ENCODE measurements at regions of chr11 and their contacts with region 1.

Region 1: DNA sequence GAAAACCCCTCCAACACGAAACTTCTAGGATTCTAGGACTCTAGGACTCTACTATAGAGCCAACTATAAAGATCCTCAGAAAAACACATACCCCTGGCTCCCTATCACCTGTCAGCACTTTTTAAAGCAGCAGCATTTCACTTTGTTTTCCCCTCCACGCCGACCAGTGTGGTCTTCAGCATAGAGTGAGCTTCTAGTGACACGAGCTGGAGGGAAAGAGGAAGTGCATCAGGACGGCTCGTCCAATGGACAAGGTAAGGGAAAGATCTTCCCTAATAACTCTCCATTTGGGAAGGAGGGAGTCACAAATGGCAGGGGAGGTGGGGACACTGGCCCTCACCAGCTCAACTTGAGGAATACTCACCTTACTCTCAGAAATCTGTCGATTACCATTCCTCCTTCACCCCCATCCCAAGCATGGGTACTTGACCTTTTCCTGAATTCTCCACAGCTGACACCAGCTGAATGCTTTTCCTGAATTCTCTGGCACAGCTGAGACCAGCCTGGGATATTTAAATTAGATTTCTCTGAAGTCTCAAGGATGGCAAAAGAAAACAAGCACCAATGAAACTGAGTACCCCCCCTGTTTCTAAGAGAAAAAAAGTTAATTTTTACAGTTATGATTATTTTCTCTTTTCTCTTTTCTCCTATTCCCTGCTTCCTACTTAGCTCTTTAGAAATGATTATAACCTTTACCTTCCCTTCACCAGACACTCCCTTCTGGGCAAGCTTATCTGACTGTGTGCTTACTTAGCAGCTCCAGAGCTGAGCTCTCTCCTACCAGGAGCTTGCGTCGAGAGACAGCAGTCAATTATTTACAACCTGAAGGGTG is 33.3 kb upstream of the NNMT start:
- DNase-seq: peak; percentile 44
- H3K4me3 Mint-ChIP-seq: no peak overlapping the region
- H3K27ac Mint-ChIP-seq: no peak overlapping the region
- H3K4me1 Mint-ChIP-seq: peaks cover 6% of the 10 kb centered on the region
- H3K27me3 Mint-ChIP-seq: peaks cover 16% of the 10 kb centered on the region

Region 2: DNA sequence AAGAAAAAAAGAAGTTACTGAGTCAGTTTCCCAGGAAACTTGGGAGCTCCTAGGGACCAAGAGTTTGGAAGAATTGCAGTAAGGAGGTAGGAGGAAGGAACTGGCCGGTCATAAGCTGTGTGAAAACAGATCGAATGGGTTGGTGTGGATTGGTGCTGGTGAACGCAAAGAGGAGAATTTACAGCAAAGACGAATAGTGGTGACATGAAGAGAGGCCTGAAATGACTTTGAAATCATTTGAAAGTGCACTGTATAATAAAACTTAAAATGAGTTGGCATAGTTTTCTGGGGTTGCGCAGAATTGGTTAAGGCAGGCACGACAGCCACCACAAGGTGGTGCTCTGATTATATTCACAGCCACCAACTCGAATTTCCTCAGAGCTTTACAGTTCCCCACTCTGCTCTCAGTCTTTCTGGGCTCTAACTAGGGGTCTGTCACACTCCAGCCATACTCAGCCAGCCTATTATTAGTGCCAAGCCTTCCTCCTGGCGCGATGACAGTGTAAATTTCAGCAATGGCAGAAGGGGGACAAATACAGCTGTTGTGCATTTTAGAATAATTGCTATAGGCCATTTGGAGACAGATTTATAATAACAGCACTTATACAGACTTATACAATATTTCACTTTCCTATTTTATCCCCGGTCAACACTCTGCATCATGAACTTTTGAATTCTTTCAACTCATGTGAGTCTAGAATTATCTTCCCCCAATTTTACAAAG is 366.6 kb before region 1 on chr11:
- CTCF ChIA-PET with region 1: interaction called, 150 read pairs
- DNase-seq: peak; percentile 52
- H3K4me3 Mint-ChIP-seq: no peak overlapping the region
- H3K27ac Mint-ChIP-seq: no peak overlapping the region
- H3K4me1 Mint-ChIP-seq: no peaks in the 10 kb centered on the region
- H3K27me3 Mint-ChIP-seq: peaks cover 13% of the 10 kb centered on the region

Region 3: GRCh38 chr11:113994077-113994954 is 268.6 kb before region 1 on chr11:
- CTCF ChIA-PET with region 1: interaction called, 253 read pairs
- DNase-seq: peak; percentile 47
- H3K4me3 Mint-ChIP-seq: no peak overlapping the region
- H3K27ac Mint-ChIP-seq: no peak overlapping the region
- H3K4me1 Mint-ChIP-seq: peaks cover 6% of the 10 kb centered on the region
- H3K27me3 Mint-ChIP-seq: peaks cover 50% of the 10 kb centered on the region

Region 4: DNA sequence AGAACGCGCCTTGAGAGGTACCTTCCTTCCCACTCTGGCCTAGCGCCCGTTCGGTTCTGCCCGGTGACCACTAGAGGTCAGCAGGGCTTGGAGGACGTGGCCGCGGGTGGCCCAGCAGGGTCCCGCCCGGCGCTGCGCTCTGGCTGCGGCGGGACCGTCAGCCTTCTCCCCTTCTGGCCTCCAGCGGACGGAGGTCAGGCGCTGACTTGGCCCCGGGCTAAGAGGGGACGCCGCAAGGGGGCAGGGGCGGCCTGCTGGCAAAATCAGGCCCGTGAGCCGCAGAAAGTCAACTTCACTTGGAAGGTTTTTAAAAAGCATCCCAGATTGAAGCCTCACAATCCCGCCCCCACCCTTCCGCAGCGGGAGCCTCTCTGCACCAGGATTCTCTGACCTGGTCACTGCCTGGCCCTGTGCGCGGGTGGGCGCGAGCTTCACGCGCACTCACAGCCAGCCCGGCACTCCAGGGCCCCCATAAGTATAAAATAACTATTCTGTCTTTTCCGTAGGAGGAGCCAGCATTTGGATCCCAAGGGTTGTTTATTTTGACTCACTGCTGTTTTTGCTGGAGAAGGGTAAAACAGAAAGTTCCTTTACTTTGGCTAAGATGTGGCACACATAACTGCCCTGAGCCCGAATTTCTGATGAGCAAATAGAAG is 226.6 kb before region 1 on chr11:
- CTCF ChIA-PET with region 1: interaction called, 114 read pairs
- DNase-seq: peak; percentile 62
- H3K4me3 Mint-ChIP-seq: no peak overlapping the region
- H3K27ac Mint-ChIP-seq: no peak overlapping the region
- H3K4me1 Mint-ChIP-seq: no peaks in the 10 kb centered on the region
- H3K27me3 Mint-ChIP-seq: peaks cover 49% of the 10 kb centered on the region

Region 5: GRCh38 chr11:114059278-114059983 is 203.5 kb before region 1 on chr11 and contains the start of gene ZBTB16:
- CTCF ChIA-PET with region 1: interaction called, 53 read pairs
- DNase-seq: peak; percentile 70
- H3K4me3 Mint-ChIP-seq: peak within 1 kb of the TSS; percentile 85
- H3K27ac Mint-ChIP-seq: peak within 1 kb of the TSS; percentile 24
- H3K4me1 Mint-ChIP-seq: peaks cover 13% of the 10 kb centered on the region
- H3K27me3 Mint-ChIP-seq: peaks cover 99% of the 10 kb centered on the region

Region 6: DNA sequence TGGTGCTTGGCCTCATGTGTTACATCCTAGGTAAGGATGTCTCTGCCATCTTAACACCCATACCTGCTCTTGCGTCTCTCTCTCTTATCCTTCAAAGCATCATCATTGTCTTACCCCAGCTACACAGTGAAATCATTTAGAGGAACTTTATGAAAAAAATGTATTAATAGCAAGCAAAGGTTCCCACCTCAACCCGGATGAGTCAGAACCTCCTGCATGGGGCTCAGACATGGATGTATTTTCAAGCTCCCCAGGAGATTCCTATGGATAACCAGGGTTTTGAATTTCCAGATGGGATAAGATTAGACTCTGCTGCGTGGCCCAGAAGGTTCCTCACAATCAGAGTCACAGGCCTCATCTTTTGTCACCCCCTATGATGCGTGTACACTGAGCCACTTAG is 55.8 kb before region 1 on chr11:
- CTCF ChIA-PET with region 1: interaction called, 10 read pairs
- DNase-seq: no peak
- H3K4me3 Mint-ChIP-seq: no peak overlapping the region
- H3K27ac Mint-ChIP-seq: no peak overlapping the region
- H3K4me1 Mint-ChIP-seq: peaks cover 49% of the 10 kb centered on the region
- H3K27me3 Mint-ChIP-seq: peaks cover 27% of the 10 kb centered on the region

Region 7: GRCh38 chr11:114275280-114275679 is 12.4 kb after region 1 on chr11:
- CTCF ChIA-PET with region 1: interaction called, 14 read pairs
- DNase-seq: no peak
- H3K4me3 Mint-ChIP-seq: no peak overlapping the region
- H3K27ac Mint-ChIP-seq: no peak overlapping the region
- H3K4me1 Mint-ChIP-seq: no peaks in the 10 kb centered on the region
- H3K27me3 Mint-ChIP-seq: peaks cover 41% of the 10 kb centered on the region

Region 8: DNA sequence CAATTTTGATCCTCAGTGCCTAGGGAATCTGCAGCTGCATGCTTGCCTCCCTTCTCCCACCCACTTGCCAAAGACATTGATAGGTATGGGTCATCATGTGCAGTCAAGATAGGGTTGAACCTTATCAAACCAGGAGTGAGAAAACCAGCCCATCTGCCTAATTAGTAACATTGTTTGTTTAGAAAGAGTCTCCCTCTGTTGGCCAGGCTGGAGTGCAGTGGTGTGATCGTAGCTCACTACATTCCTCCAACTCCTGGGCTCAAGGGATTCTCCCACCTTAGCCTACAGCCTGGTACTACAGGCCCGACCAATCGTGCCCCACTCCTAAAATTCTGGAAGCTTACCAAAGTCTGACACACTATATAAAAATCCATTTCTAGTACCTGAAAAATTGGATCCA is 132.8 kb after region 1 on chr11:
- CTCF ChIA-PET with region 1: no interaction called
- DNase-seq: no peak
- H3K4me3 Mint-ChIP-seq: no peak overlapping the region
- H3K27ac Mint-ChIP-seq: no peak overlapping the region
- H3K4me1 Mint-ChIP-seq: peaks cover 16% of the 10 kb centered on the region
- H3K27me3 Mint-ChIP-seq: peaks cover 18% of the 10 kb centered on the region

Region 9: GRCh38 chr11:114452399-114452798 is 189.5 kb after region 1 on chr11:
- CTCF ChIA-PET with region 1: no interaction called
- DNase-seq: no peak
- H3K4me3 Mint-ChIP-seq: no peak overlapping the region
- H3K27ac Mint-ChIP-seq: no peak overlapping the region
- H3K4me1 Mint-ChIP-seq: no peaks in the 10 kb centered on the region
- H3K27me3 Mint-ChIP-seq: no peaks in the 10 kb centered on the region